Activated B cell treated with CpG ODN at 0.5 μM for 24 hours (primary cell): ENCODE measurements at regions of chr14 and their contacts with region 1.

Region 1: GRCh38 chr14:91009501-91010152 is 50.8 kb downstream of the RPS6KA5 start:
- DNase-seq: no peak
- ATAC-seq: peak; percentile 87
- H3K4me3 Mint-ChIP-seq: peak overlapping the region; percentile 75
- H3K27ac Mint-ChIP-seq: peak overlapping the region; percentile 92
- H3K4me1 Mint-ChIP-seq: peaks cover 57% of the 10 kb centered on the region
- H3K27me3 Mint-ChIP-seq: no peaks in the 10 kb centered on the region
- CTCF ChIP-seq: no peak

Region 2: DNA sequence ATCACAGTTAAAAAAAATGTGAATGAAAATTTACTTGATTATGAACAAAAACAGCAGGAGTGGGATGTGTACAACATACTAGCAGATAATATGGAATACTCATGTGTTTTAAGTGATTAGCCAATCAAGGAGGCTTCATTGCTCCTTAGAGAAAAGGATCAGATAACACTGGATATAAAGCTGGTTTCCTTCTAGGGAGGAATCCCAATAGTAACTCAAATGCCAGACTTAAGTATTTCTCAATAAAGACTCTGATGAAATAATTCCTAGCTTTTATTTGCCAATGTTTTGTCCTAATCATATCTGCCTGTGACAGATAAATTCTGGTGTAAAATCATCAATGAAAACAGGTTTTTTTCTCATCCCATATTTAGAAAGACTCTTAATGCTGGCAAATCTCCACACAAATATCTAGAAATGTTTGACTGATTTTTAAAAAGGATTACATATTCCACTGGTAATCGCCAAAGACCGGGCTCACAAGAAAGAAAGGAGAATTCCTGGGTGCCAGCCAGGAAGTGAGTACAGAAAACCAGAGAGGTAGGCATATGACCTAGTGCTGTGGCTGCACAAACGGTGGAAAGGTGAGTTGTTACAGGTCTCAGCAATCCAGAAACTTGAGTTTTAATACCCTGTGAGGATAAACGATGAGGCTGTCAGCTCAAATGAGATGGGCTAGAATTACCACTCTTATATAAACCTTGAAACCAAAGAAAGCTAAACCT is 84.8 kb before region 1 on chr14:
- CTCF ChIA-PET with region 1: no interaction called
- POLR2A ChIA-PET with region 1: no interaction called
- intact Hi-C with region 1: no loop called
- DNase-seq: no peak
- ATAC-seq: no peak
- H3K4me3 Mint-ChIP-seq: no peak overlapping the region
- H3K27ac Mint-ChIP-seq: no peak overlapping the region
- H3K4me1 Mint-ChIP-seq: no peaks in the 10 kb centered on the region
- H3K27me3 Mint-ChIP-seq: no peaks in the 10 kb centered on the region
- CTCF ChIP-seq: no peak

Region 3: DNA sequence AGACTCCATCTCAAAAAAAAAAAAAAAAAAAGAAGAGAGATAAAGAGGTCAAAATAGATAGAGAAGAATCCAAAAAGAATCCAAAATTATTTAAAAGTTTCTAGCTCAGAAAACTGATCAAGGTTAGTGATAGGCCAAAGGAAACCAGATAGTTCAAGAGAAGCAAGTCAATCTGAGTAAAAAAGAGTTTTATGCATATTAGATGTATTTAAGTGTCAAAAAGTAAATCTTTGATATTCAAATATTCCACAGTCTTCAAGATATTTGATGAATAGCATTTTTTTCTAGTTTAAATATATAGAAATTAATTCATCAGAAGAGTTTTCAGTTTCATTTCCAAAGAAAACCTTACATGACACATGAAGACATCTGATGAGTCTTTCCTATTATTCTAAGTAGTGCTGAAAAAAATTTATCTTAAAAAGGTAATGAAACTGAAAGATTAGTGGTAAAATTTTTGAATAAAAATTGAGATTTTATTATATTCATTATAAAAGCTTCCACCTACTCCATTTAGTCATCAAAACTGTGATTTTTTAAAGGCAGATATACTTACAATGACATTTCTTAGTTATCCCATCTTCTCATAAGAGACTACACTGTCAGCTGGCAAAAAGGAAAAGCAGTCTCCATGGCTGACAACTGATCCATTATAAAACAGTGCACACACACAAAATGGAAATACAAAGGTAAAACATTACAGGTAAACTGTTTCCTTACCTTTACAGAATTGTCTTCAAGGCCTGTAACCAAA is 17.8 kb before region 1 on chr14:
- CTCF ChIA-PET with region 1: interaction called, 3 read pairs
- POLR2A ChIA-PET with region 1: interaction called, 9 read pairs
- intact Hi-C with region 1: loop called (anchors 2 kb)
- DNase-seq: no peak
- ATAC-seq: no peak
- H3K4me3 Mint-ChIP-seq: no peak overlapping the region
- H3K27ac Mint-ChIP-seq: peak overlapping the region; percentile 53
- H3K4me1 Mint-ChIP-seq: peaks cover 36% of the 10 kb centered on the region
- H3K27me3 Mint-ChIP-seq: no peaks in the 10 kb centered on the region
- CTCF ChIP-seq: no peak

Region 4: GRCh38 chr14:91021991-91022621 is 12.5 kb after region 1 on chr14:
- CTCF ChIA-PET with region 1: interaction called, 4 read pairs
- POLR2A ChIA-PET with region 1: interaction called, 17 read pairs
- intact Hi-C with region 1: loop called (anchors 1 kb)
- DNase-seq: no peak
- ATAC-seq: peak; percentile 65
- H3K4me3 Mint-ChIP-seq: peak overlapping the region; percentile 79
- H3K27ac Mint-ChIP-seq: peak overlapping the region; percentile 92
- H3K4me1 Mint-ChIP-seq: peaks cover 61% of the 10 kb centered on the region
- H3K27me3 Mint-ChIP-seq: no peaks in the 10 kb centered on the region
- CTCF ChIP-seq: no peak

Region 5: GRCh38 chr14:91114079-91115065 is 104.7 kb after region 1 on chr14:
- CTCF ChIA-PET with region 1: no interaction called
- POLR2A ChIA-PET with region 1: interaction called, 8 read pairs
- intact Hi-C with region 1: loop called (anchors 2 kb)
- DNase-seq: peak; percentile 54
- ATAC-seq: peak; percentile 84
- H3K4me3 Mint-ChIP-seq: peak overlapping the region; percentile 98
- H3K27ac Mint-ChIP-seq: peak overlapping the region; percentile 98
- H3K4me1 Mint-ChIP-seq: peaks cover 67% of the 10 kb centered on the region
- H3K27me3 Mint-ChIP-seq: no peaks in the 10 kb centered on the region
- CTCF ChIP-seq: no peak